A673 (cell line): ENCODE measurements at regions of chr1 and their contacts with region 1.

Region 1: DNA sequence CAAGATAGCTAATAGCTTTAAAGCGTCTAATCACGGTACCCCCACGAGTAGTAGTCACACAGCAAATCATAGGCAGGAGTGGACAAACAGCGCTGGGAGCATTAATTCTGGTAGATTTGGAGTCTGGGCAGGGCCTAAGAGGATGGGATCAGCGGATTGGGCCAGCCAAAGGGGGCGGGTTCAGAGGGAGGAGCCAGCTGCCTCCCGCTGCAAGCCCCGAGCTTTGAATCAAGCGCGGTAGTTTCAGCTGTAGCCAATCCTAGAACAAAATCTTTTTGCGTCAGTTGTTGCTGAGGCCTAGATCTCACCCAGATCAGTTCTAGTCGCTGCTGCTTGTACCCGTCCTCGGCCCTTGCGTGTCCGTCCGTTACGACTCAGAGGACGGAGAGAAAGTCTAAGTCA is 576 bp upstream of the NASP start:
- DNase-seq: peak; percentile 98
- H3K4me3 ChIP-seq: peak overlapping the region; percentile 93
- H3K27ac ChIP-seq: peak overlapping the region; percentile 99
- H3K4me1 ChIP-seq: peaks cover 11% of the 10 kb centered on the region
- H3K27me3 ChIP-seq: no peaks in the 10 kb centered on the region
- CTCF ChIP-seq: no peak

Region 2: GRCh38 chr1:45512641-45513054 is 70.6 kb before region 1 on chr1:
- CTCF ChIA-PET with region 1: no interaction called
- POLR2A ChIA-PET with region 1: interaction called, 13 read pairs
- intact Hi-C with region 1: no loop called
- DNase-seq: peak; percentile 63
- H3K4me3 ChIP-seq: no peak overlapping the region
- H3K27ac ChIP-seq: no peak overlapping the region
- H3K4me1 ChIP-seq: peaks cover 12% of the 10 kb centered on the region
- H3K27me3 ChIP-seq: no peaks in the 10 kb centered on the region
- CTCF ChIP-seq: peak; percentile 78